Prostate gland (tissue), 2 donors: ENCODE measurements at regions of chr12 and their contacts with region 1.

Region 1: DNA sequence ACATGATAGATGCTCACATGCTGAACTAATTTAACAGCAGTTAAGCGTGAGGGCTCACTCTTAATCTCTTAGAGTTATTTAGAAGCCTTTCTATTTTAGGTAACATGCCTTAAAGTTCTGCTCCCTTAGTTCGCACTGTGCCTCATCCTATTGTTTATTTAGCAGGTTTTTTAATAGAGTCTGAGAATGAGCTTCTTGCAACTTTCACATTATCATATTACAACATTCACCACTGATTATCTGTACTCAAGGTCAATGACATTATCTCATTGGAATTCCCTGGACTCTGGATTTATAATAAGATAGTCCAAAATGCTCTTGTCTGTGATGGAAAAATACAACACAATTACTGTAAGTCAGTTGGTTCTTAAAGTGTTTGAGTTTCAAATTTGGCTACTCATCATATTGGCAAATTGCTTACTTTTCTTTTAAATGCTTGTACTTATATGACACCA is 183.6 kb upstream of the SLC38A2 start:
- DNase-seq: no peak
- H3K4me3 ChIP-seq: no peak overlapping the region
- H3K27ac ChIP-seq: peak overlapping the region in 1 of 2 donors; percentile 37
- H3K4me1 ChIP-seq: no peaks in the 10 kb centered on the region
- H3K27me3 ChIP-seq: no peaks in the 10 kb centered on the region
- CTCF ChIP-seq: no peak
- POLR2A ChIP-seq: no peak

Region 2: GRCh38 chr12:46089407-46090157 is 466.6 kb before region 1 on chr12:
- intact Hi-C with region 1: no loop called
- DNase-seq: no peak
- H3K4me3 ChIP-seq: no peak overlapping the region
- H3K27ac ChIP-seq: no peak overlapping the region
- H3K4me1 ChIP-seq: no peaks in the 10 kb centered on the region
- H3K27me3 ChIP-seq: no peaks in the 10 kb centered on the region
- CTCF ChIP-seq: no peak
- POLR2A ChIP-seq: no peak

Region 3: GRCh38 chr12:46382964-46383653 is 173.0 kb before region 1 on chr12:
- intact Hi-C with region 1: loop called (anchors 2 kb)
- DNase-seq: peak; percentile 97
- H3K4me3 ChIP-seq: peak overlapping the region; percentile 74 to 84
- H3K27ac ChIP-seq: peak overlapping the region; percentile 99
- H3K4me1 ChIP-seq: peaks cover 5% of the 10 kb centered on the region
- H3K27me3 ChIP-seq: no peaks in the 10 kb centered on the region
- CTCF ChIP-seq: peak in 3 of 4 experiments; percentile 29 to 55 (median 49)
- POLR2A ChIP-seq: peak; percentile 96

Region 4: GRCh38 chr12:46473634-46474329 is 82.3 kb before region 1 on chr12:
- intact Hi-C with region 1: loop called (anchors 5 kb)
- DNase-seq: peak; percentile 76
- H3K4me3 ChIP-seq: no peak overlapping the region
- H3K27ac ChIP-seq: peak overlapping the region; percentile 54 to 63
- H3K4me1 ChIP-seq: no peaks in the 10 kb centered on the region
- H3K27me3 ChIP-seq: no peaks in the 10 kb centered on the region
- CTCF ChIP-seq: no peak
- POLR2A ChIP-seq: no peak

Region 5: DNA sequence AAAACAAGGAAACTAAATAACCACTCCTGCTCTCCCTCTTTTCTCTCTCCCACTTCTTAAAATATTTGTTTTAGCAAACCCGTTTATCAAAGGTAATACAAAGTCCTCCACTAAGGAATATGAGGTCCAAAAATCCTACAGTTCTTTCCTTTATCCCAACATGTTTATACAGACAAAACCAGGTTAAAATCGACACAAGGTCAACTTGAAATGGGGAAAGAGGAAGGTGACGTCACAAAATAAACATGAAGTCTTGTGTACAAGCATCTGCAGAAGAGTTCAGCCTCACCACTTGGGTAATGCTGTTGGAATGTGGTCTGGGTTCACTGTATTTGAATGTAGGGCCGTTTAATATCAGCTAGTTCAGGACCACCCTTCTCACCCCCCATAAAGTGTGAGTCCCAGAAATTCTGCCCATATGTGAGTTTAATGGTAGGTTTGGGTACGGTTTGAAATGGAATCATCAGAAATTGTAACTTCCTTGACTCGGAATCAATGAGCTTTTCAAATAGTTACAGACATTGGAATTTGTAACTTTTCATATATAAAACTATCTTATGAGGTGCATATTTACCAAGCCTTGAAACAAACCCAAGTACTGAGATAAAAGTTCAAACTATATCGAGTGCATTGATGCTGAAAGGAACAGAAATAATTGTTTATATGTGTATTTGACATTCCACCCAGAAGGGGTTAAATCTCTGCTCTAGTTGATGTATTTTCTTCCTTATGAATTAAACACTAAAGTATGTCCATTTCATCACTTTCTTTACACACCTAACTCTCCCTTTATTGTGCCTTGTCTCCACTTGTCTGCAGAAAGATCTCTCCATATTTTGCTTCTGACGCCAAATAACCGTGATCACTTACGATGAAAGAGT is 63.4 kb before region 1 on chr12:
- intact Hi-C with region 1: loop called (anchors 10 kb)
- DNase-seq: no peak
- H3K4me3 ChIP-seq: no peak overlapping the region
- H3K27ac ChIP-seq: peak overlapping the region; percentile 60 to 82
- H3K4me1 ChIP-seq: no peaks in the 10 kb centered on the region
- H3K27me3 ChIP-seq: no peaks in the 10 kb centered on the region
- CTCF ChIP-seq: no peak
- POLR2A ChIP-seq: no peak

Region 6: GRCh38 chr12:46516933-46517578 is 39.1 kb before region 1 on chr12:
- intact Hi-C with region 1: loop called (anchors 5 kb)
- DNase-seq: no peak
- H3K4me3 ChIP-seq: no peak overlapping the region
- H3K27ac ChIP-seq: no peak overlapping the region
- H3K4me1 ChIP-seq: no peaks in the 10 kb centered on the region
- H3K27me3 ChIP-seq: no peaks in the 10 kb centered on the region
- CTCF ChIP-seq: no peak
- POLR2A ChIP-seq: no peak